ENCODE measurements at regions of chr11 and their contacts with region 1.

Region 1: DNA sequence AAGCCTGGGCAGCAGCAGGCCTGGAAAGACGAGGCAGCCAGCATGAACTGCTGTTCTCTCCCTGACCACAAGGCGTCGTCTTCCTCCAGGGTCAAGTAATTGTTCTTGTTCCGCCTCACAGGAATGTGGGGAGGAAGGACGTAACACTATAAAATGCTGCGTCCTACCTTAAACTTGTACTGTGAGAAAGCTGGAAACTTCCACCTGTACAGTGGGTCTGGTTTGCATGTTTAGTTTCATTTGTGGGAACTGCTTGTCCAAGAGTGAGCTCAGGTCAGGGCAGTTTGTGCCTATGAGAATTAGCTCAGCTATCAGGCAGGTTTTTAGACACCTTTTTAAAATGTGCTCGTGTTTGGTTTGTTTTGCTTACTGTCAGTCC is 55.2 kb downstream of the PANX1 start:
- DNase-seq: peak; percentile 29
- ATAC-seq: no peak
- H3K4me3 Mint-ChIP-seq: no peak overlapping the region
- H3K27ac Mint-ChIP-seq: no peak overlapping the region
- H3K4me1 Mint-ChIP-seq: no peaks in the 10 kb centered on the region
- H3K27me3 Mint-ChIP-seq: no peaks in the 10 kb centered on the region

Region 2: DNA sequence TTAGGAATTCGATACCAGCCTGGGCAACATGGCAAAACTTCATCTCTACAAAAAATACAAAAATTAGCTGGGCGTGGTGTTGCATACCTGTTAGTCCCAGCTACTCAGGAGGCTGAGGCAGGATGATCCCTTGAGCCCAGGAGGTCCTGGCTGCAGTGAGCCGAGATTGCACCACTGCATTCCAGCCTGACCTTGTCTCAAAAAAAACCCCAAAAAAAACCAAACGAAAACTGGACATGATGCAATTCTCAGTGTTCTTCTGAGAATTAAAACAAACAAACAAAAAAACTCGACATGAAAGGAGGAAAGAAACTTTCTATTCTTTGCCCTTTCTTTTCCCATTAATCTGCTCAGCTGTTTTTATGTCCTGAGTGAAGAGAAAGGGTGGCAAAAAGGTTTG is 392.4 kb before region 1 on chr11:
- CTCF ChIA-PET with region 1: no interaction called
- POLR2A ChIA-PET with region 1: no interaction called
- DNase-seq: no peak
- ATAC-seq: no peak
- H3K4me3 Mint-ChIP-seq: no peak overlapping the region
- H3K27ac Mint-ChIP-seq: no peak overlapping the region
- H3K4me1 Mint-ChIP-seq: peaks cover 21% of the 10 kb centered on the region
- H3K27me3 Mint-ChIP-seq: no peaks in the 10 kb centered on the region

Region 3: DNA sequence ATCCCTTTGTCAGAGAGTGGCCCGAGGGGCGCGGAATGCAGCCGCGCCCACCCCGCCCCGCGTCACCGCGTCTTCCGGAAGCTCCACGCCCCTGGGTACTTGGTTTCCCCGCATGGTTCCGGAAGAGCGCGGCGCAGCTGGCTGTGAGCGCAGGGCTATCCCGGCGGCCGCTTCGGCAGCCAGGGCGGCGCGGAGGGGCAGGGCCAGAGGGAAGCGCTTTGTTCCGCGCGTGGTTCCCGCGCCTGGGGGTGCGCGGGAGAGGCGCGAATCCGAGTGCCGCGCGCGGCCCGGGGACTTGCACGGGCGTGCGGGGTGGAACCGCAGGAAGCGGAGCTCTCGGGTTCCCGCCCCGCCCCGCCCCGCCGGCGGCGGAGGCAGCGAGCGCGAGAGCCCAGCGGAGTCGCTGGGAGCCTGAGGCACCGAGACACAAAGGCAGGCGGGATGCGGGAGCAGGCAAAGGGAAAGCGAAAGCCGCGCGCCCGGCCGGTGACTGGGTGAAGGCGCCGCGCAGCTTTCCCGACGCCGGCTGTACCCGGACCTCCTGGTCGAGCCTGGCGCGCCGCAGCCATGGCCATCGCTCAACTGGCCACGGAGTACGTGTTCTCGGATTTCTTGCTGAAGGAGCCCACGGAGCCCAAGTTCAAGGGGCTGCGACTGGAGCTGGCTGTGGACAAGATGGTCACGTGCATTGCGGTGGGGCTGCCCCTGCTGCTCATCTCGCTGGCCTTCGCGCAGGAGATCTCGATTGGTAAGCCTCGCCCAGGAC is 54.9 kb before region 1 on chr11 and contains the start of gene PANX1:
- CTCF ChIA-PET with region 1: interaction called, 10 read pairs
- POLR2A ChIA-PET with region 1: interaction called, 4 read pairs
- DNase-seq: peak; percentile 81
- ATAC-seq: peak; percentile 87
- H3K4me3 Mint-ChIP-seq: no peak within 1 kb of the TSS
- H3K27ac Mint-ChIP-seq: peak within 1 kb of the TSS; percentile 94
- H3K4me1 Mint-ChIP-seq: peaks cover 27% of the 10 kb centered on the region
- H3K27me3 Mint-ChIP-seq: no peaks in the 10 kb centered on the region
- total RNA-seq, gene PANX1: 12.0 to 13.0 TPM

Region 4: GRCh38 chr11:94139421-94139820 is 44.5 kb before region 1 on chr11:
- CTCF ChIA-PET with region 1: no interaction called
- POLR2A ChIA-PET with region 1: no interaction called
- DNase-seq: no peak
- ATAC-seq: no peak
- H3K4me3 Mint-ChIP-seq: no peak overlapping the region
- H3K27ac Mint-ChIP-seq: no peak overlapping the region
- H3K4me1 Mint-ChIP-seq: peaks cover 29% of the 10 kb centered on the region
- H3K27me3 Mint-ChIP-seq: no peaks in the 10 kb centered on the region

Region 5: GRCh38 chr11:94151903-94152677 is 31.8 kb before region 1 on chr11:
- CTCF ChIA-PET with region 1: no interaction called
- POLR2A ChIA-PET with region 1: no interaction called
- DNase-seq: no peak
- ATAC-seq: peak; percentile 38
- H3K4me3 Mint-ChIP-seq: no peak overlapping the region
- H3K27ac Mint-ChIP-seq: no peak overlapping the region
- H3K4me1 Mint-ChIP-seq: peaks cover 51% of the 10 kb centered on the region
- H3K27me3 Mint-ChIP-seq: no peaks in the 10 kb centered on the region

Region 6: DNA sequence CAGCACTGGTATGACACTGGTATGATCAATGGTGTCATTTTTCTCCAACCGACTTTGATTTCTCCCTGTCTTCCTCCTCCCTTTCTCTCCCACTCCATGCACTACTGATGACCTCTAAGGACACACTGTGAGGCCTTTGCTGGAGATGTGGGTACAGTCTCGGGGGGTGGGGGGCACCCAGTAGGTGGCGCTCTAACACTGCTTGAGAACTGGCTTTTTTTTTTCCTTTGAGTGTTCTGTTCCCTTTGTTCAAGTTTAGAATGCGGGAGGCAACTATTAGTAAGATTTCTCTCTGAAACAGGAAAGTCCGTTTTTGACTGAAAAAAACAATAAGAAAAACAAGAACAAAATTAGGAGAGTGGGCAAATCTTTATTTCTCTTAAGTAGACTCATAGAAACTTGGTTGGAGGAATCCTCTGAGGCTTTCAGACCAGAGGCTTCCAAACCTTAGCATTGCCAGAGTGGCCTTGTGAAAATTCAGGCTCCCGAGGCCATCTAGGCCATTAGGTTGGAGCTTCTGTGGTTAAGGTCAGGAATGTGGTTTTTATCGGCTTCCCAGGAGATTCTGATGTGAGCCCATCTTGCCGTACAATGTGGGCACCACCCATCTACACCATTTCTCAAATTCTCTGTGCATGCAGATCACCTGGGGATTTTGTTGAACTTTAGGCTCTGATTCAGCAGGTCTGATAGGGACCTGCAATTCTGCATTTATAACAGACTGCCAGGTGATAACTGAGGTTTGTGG is 12.0 kb before region 1 on chr11:
- CTCF ChIA-PET with region 1: interaction called, 26 read pairs
- POLR2A ChIA-PET with region 1: no interaction called
- DNase-seq: peak; percentile 46
- ATAC-seq: peak; percentile 58
- H3K4me3 Mint-ChIP-seq: no peak overlapping the region
- H3K27ac Mint-ChIP-seq: no peak overlapping the region
- H3K4me1 Mint-ChIP-seq: peaks cover 5% of the 10 kb centered on the region
- H3K27me3 Mint-ChIP-seq: no peaks in the 10 kb centered on the region